ENCODE measurements at regions of chr5 and their contacts with region 1.

Region 1: DNA sequence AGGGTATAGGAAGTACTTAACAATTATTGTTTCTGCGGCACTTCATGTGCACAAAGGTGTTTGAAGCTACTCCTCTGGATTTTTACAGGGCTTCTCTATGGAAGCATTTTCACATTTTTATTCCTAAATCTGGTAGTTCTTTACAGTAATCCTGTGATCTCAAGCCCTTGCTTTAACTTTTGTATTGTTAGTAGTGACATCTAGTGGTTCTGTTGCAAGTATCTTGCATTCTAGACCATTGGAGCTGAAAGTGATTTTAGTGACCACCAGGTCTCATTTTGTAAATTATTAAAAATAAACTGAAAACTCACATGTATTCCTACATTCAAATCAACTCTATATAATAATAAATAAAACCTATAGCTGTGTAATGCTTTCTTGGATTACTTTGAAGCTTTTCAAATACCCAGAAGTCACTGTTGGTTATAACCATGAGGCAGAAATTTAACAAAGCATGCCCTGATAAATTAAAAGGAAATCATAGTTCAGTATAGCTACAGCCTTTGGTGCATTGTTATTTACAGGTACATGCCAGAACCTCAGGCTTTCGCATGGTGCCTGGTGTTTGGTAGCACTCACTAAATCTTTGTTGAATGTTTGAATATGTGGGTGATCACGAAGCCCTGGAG is 18.9 kb downstream of the RPS23 start:
- DNase-seq: peak; percentile 11
- H3K4me3 ChIP-seq: no peak overlapping the region
- H3K27ac ChIP-seq: no peak overlapping the region
- H3K27me3 ChIP-seq: no peaks in the 10 kb centered on the region
- CTCF ChIP-seq: peak; percentile 67

Region 2: DNA sequence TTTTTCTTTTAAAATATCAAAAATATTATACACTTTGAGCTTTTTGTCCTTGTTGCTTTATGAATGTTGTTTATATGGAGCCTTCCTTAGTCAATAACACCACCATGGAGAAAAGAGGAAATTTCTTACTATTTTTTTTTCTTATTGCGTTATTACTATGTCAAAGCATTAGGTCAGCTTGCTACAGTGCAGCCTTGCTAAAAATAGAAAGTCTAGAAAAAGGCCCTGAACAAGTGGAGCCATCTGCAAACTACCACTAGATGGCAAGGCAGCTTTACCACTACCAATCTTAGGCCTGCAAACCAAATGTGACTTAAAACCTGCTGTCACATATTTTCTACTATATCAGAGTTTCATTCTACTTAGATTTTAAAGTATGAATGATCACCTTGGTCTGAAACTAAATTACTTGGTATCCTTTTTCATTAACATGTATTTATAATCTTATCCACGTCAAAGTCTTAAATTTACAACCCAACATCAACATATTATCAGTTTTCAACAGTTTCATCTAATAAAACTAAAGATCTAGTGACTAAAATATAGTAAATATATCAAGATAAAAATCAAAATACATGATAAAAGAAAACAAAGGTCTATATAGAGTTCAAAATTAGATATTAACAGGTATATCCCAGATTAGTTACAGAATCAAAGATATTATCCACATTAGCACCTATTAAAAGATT is 752.2 kb before region 1 on chr5:
- CTCF ChIA-PET with region 1: interaction called, 22 read pairs
- POLR2A ChIA-PET with region 1: no interaction called
- DNase-seq: peak; percentile 75
- H3K4me3 ChIP-seq: no peak overlapping the region
- H3K27ac ChIP-seq: no peak overlapping the region
- H3K27me3 ChIP-seq: no peaks in the 10 kb centered on the region
- CTCF ChIP-seq: peak; percentile 96

Region 3: GRCh38 chr5:82246960-82247574 is 12.2 kb before region 1 on chr5:
- CTCF ChIA-PET with region 1: interaction called, 31 read pairs
- POLR2A ChIA-PET with region 1: no interaction called
- DNase-seq: no peak
- H3K4me3 ChIP-seq: no peak overlapping the region
- H3K27ac ChIP-seq: no peak overlapping the region
- H3K27me3 ChIP-seq: no peaks in the 10 kb centered on the region
- CTCF ChIP-seq: no peak

Measured in AG04450 (cell line).